ENCODE measurements at regions of chr14 and their contacts with region 1.

Region 1: GRCh38 chr14:101665515-101666078 is 95.9 kb upstream of the PPP2R5C start:
- DNase-seq: peak; percentile 71 to 81
- H3K4me3 ChIP-seq: no peak overlapping the region
- H3K27ac ChIP-seq: no peak overlapping the region
- H3K4me1 ChIP-seq: no peaks in the 10 kb centered on the region
- H3K27me3 ChIP-seq: no peaks in the 10 kb centered on the region
- CTCF ChIP-seq: peak; percentile 99

Region 2: GRCh38 chr14:100383727-100384158 is 1281.9 kb before region 1 on chr14:
- CTCF ChIA-PET with region 1: no interaction called
- POLR2A ChIA-PET with region 1: no interaction called
- intact Hi-C with region 1: loop called (anchors 5 kb)
- DNase-seq: no peak
- H3K4me3 ChIP-seq: no peak overlapping the region
- H3K27ac ChIP-seq: no peak overlapping the region
- H3K4me1 ChIP-seq: no peaks in the 10 kb centered on the region
- H3K27me3 ChIP-seq: no peaks in the 10 kb centered on the region
- CTCF ChIP-seq: peak; percentile 75

Region 3: DNA sequence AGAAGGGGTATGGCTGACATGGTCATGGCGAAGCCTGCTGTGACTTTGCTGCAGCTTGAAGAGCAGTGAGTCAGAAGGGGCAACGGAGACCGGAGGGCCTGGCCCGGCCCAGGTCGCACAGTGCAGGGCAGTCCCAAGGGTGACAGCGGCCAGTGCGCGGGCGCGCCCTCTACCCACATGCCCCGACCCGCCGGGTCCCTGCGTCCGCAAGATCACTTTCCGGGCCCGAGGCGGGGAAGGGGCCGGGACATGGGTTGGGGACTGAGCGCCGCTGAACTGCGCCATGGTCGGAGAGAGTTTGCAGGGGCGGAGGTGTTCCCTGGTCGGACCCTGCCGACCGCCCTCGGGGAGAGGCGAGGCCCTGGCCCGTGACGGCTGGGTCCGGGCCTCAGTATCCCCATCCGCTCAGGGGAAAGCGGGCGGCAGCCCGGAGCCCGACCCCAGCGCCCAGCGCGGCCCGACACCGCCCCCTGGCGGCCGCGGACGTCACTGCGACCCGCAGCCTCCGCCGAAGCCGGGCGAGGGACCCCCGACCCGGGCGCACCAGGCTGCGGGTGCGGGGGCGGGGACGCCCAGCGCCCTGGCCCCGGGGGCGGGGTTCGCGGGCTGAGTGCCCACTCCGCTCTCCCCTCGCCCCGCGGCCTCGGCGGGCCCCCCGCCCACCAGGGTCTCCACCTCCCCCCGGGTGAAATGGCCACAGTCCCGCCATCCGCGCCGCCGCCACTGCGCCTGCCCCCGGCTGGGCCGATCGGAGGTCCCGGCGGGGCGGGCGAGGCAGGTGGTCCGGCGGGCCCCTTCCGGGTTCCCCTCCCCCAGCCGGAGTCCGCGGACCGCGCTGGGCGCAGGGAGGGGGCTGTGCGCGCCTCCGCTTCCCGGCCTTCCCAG is 851.2 kb after region 1 on chr14:
- CTCF ChIA-PET with region 1: no interaction called
- POLR2A ChIA-PET with region 1: no interaction called
- intact Hi-C with region 1: loop called (anchors 1 kb)
- DNase-seq: peak; percentile 55 to 72
- H3K4me3 ChIP-seq: peak overlapping the region; percentile 73
- H3K27ac ChIP-seq: no peak overlapping the region
- H3K4me1 ChIP-seq: peaks cover 7% of the 10 kb centered on the region
- H3K27me3 ChIP-seq: no peaks in the 10 kb centered on the region
- CTCF ChIP-seq: peak; percentile 89

Region 4: DNA sequence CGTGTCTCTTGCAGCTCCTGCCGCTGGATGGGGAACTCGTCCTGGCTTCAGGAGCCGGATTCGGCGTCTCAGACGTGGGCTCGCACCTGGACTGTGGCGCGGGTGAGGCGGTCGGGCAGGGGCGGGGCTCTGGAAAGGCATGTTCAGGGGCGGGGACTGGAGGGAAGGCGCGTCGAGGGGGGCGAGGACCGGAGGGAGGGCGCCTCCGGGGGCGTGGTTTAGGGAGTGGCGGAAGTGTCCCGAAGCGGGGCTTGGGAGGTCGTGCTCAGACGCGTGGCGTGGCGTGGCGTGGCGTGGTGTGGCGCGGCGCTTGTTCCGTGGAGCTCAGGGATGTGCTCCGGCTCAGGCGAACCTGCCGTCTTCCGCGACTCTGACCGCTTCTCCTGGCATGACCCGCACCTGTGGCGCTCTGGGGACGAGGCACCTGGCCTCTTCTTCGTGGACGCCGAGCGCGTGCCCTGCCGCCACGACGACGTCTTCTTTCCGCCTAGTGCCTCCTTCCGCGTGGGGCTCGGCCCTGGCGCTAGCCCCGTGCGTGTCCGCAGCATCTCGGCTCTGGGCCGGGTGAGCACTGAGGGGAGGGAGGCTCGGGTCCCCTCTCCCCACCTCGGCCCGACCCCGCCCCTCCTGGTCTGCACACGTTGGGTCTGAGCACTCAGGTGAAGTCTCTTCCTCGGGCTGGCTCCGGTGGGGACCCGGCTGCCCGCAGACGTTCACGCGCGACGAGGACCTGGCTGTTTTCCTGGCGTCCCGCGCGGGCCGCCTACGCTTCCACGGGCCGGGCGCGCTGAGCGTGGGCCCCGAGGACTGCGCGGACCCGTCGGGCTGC is 1263.0 kb after region 1 on chr14:
- CTCF ChIA-PET with region 1: no interaction called
- POLR2A ChIA-PET with region 1: no interaction called
- intact Hi-C with region 1: loop called (anchors 5 kb)
- DNase-seq: peak; percentile 83 to 97
- H3K4me3 ChIP-seq: peak overlapping the region; percentile 87
- H3K27ac ChIP-seq: peak overlapping the region; percentile 74
- H3K4me1 ChIP-seq: peaks cover 20% of the 10 kb centered on the region
- H3K27me3 ChIP-seq: no peaks in the 10 kb centered on the region
- CTCF ChIP-seq: no peak